ENCODE measurements at regions of chr10 and their contacts with region 1.

Region 1: GRCh38 chr10:89954787-89955566 is 253.6 kb downstream of the KIF20B start:
- DNase-seq: no peak
- H3K4me3 ChIP-seq: no peak overlapping the region
- H3K27me3 ChIP-seq: no peaks in the 10 kb centered on the region; the same call in 1 of the 2 replicates
- CTCF ChIP-seq: peak; percentile 34; the same call in 1 of the 2 replicates

Region 2: GRCh38 chr10:89975771-89976170 is 20.8 kb after region 1 on chr10:
- CTCF ChIA-PET with region 1: interaction called, 12 read pairs
- POLR2A ChIA-PET with region 1: no interaction called
- DNase-seq: no peak
- H3K4me3 ChIP-seq: no peak overlapping the region
- H3K27me3 ChIP-seq: no peaks in the 10 kb centered on the region
- CTCF ChIP-seq: no peak

Measured in BJ (cell line).